ENCODE measurements at regions of chr5 and their contacts with region 1.

Region 1: DNA sequence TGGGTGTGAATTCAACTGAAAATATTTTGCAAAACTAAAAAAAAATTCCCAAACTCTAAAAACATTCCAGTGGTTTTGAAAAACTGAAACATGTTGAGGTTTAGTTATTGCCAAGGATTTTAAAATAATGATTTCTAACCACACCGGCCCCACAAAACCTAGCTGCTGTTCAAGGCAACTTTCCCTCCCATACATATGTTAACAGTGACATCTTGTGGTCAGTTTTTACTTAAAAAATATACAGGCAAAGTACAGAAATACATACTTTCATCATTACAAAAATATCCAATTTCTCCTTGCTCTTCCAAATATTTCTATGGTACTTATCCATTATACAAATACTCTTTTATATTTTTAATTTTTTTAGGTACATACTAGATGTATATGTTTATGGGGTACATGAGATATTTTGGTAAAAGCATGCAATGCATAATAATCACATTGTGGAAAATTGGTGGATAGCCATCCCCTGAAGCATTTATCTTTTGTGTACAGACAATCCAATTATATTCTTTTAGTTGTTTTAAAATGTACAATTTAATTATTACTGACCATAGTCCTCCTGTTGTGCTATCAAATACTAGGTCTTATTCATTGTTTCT is 34.4 kb upstream of the MRPS30 start:
- DNase-seq: peak in 1 of 10 donors; percentile 29
- H3K4me3 ChIP-seq: no peak overlapping the region
- H3K27ac ChIP-seq: peak overlapping the region in 3 of 59 donors; percentile 3 to 8 (median 5)
- H3K27me3 ChIP-seq: no peaks in the 10 kb centered on the region
- CTCF ChIP-seq: peak; percentile 38 to 91 (median 72)

Region 2: GRCh38 chr5:44536650-44537260 is 237.6 kb before region 1 on chr5:
- intact Hi-C with region 1: loop called (anchors 2 to 5 kb)
- DNase-seq: peak in 4 of 10 donors; percentile 3 to 28 (median 7)
- H3K4me3 ChIP-seq: no peak overlapping the region
- H3K27ac ChIP-seq: no peak overlapping the region
- H3K27me3 ChIP-seq: no peaks in the 10 kb centered on the region
- CTCF ChIP-seq: peak; percentile 21 to 76 (median 63)

Region 3: DNA sequence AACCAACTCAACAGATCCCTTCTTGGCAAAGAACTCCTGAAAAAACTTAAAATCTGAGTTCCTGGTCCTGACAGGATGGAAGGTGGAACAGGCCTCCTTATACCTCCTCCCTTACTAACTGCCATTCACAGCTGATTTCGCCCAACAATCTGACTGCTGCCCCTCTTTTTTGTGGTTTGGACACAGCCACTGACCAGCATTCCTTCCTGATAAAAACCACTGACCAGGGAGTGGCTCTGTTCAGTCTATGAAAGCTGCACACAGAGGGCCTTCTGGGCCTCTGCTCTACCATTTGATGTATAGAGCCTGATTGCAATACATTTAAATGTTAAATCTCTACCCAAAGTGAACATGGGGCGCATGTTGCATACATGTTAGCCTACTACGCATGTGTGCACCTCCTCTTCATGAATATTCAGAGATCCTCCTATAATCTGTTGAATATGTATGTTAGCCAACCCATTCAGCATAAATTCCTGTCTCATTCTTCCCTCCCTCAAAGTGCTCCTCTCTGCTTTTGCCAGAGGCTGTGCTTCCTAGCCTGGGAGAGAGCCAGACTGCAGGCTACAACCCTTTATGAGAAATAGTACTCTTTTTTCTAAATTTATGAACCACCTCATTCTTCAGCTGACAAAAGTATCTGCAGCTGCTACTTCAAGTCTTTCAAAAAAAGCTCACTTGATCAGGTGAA is 59.4 kb before region 1 on chr5:
- intact Hi-C with region 1: no loop called
- DNase-seq: no peak
- H3K4me3 ChIP-seq: no peak overlapping the region
- H3K27ac ChIP-seq: no peak overlapping the region
- H3K27me3 ChIP-seq: no peaks in the 10 kb centered on the region
- CTCF ChIP-seq: no peak